ENCODE measurements at regions of chr4 and their contacts with region 1.

Region 1: DNA sequence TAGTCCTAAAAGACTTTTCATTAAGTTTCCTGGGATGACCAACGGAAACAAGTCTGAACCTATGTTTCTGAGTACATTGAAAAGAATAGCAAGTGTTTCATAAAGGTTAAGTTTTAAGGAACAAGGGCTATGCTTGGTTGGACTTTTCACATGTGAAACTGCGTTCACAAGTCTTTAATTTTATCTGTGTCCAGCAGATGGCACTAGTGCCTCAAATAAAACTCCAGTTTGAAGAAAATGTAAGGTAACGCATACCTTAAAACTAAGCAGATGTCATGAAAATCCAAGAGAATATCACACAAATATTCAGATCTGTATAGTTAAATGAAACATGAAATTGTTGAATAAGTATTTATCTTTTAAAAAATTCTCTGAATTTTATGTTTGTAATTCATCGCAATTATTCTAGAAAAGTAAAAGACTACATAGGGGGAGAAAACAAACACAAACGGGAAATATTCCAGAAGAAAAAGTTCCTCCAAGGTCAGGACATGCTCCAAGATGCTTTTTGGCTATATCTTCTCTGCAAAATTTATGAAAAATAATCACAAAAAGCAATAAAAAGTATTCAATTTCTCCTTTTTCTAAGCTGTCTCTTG is 89.6 kb upstream of the MAD2L1 start:
- DNase-seq: peak in 1 of 2 donors; percentile 90
- H3K4me3 ChIP-seq: no peak overlapping the region
- H3K27ac ChIP-seq: no peak overlapping the region
- H3K4me1 ChIP-seq: no peaks in the 10 kb centered on the region
- H3K27me3 ChIP-seq: no peaks in the 10 kb centered on the region
- CTCF ChIP-seq: peak in 5 of 7 experiments; percentile 32 to 63 (median 51)
- EP300 ChIP-seq: no peak
- POLR2A ChIP-seq: no peak

Region 2: GRCh38 chr4:119962631-119963030 is 193.6 kb before region 1 on chr4:
- intact Hi-C with region 1: no loop called
- DNase-seq: no peak
- H3K4me3 ChIP-seq: no peak overlapping the region
- H3K27ac ChIP-seq: no peak overlapping the region
- H3K4me1 ChIP-seq: no peaks in the 10 kb centered on the region
- H3K27me3 ChIP-seq: no peaks in the 10 kb centered on the region
- CTCF ChIP-seq: no peak
- EP300 ChIP-seq: no peak
- POLR2A ChIP-seq: no peak

Region 3: GRCh38 chr4:120096508-120097297 is 59.5 kb before region 1 on chr4:
- intact Hi-C with region 1: no loop called
- DNase-seq: no peak
- H3K4me3 ChIP-seq: no peak overlapping the region
- H3K27ac ChIP-seq: no peak overlapping the region
- H3K4me1 ChIP-seq: no peaks in the 10 kb centered on the region
- H3K27me3 ChIP-seq: no peaks in the 10 kb centered on the region
- CTCF ChIP-seq: no peak
- EP300 ChIP-seq: no peak
- POLR2A ChIP-seq: no peak

Region 4: DNA sequence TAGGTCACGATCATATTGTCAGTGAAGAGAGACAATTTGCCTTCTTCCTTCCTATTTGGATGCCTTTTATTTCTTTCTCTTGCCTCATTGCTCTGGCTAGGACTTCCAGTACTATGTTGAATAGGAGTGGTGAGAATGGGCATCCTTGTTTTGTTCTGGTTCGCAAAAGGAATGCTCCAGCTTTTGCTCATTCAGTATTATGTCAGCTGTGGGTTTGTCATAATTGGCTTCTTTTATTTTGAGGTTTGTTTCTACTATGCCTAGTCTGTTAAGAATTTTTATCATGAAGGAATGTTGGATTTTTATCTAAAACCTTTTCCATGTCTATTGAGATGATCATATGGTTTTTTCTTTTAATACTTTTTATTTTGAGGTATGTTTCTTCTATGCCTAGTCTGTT is 62.8 kb after region 1 on chr4:
- intact Hi-C with region 1: no loop called
- DNase-seq: no peak
- H3K4me3 ChIP-seq: no peak overlapping the region
- H3K27ac ChIP-seq: no peak overlapping the region
- H3K4me1 ChIP-seq: no peaks in the 10 kb centered on the region
- H3K27me3 ChIP-seq: no peaks in the 10 kb centered on the region
- CTCF ChIP-seq: no peak
- EP300 ChIP-seq: no peak
- POLR2A ChIP-seq: no peak

Region 5: GRCh38 chr4:121096629-121097028 is 940.4 kb after region 1 on chr4:
- intact Hi-C with region 1: loop called (anchors 5 kb)
- DNase-seq: peak in 1 of 2 donors; percentile 46
- H3K4me3 ChIP-seq: no peak overlapping the region
- H3K27ac ChIP-seq: no peak overlapping the region
- H3K4me1 ChIP-seq: no peaks in the 10 kb centered on the region
- H3K27me3 ChIP-seq: no peaks in the 10 kb centered on the region
- CTCF ChIP-seq: peak in 5 of 7 experiments; percentile 9 to 55 (median 30)
- EP300 ChIP-seq: no peak
- POLR2A ChIP-seq: no peak

Region 6: GRCh38 chr4:121252224-121252806 is 1096.1 kb after region 1 on chr4:
- intact Hi-C with region 1: loop called (anchors 5 kb)
- DNase-seq: peak; percentile 68 to 83
- H3K4me3 ChIP-seq: no peak overlapping the region
- H3K27ac ChIP-seq: no peak overlapping the region
- H3K4me1 ChIP-seq: no peaks in the 10 kb centered on the region
- H3K27me3 ChIP-seq: no peaks in the 10 kb centered on the region
- CTCF ChIP-seq: peak in 5 of 7 experiments; percentile 60 to 87 (median 65)
- EP300 ChIP-seq: no peak
- POLR2A ChIP-seq: no peak